Ascending aorta (tissue), 2 donors: ENCODE measurements at regions of chr9 and their contacts with region 1.

Region 1: GRCh38 chr9:110936719-110937452 is 101.4 kb downstream of the LPAR1 start:
- DNase-seq: peak in 1 of 2 donors; percentile 66
- H3K4me3 ChIP-seq: no peak overlapping the region
- H3K27ac ChIP-seq: peak overlapping the region; percentile 84 to 91
- H3K4me1 ChIP-seq: peaks cover 9 to 43% of the 10 kb centered on the region in 2 donors
- H3K27me3 ChIP-seq: no peaks in the 10 kb centered on the region
- CTCF ChIP-seq: no peak

Region 2: GRCh38 chr9:110650991-110651411 is 285.9 kb before region 1 on chr9:
- intact Hi-C with region 1: loop called (anchors 5 kb)
- DNase-seq: peak in 1 of 2 donors; percentile 77
- H3K4me3 ChIP-seq: no peak overlapping the region
- H3K27ac ChIP-seq: peak overlapping the region; percentile 64 to 65
- H3K4me1 ChIP-seq: peaks cover 0 to 13% of the 10 kb centered on the region in 2 donors
- H3K27me3 ChIP-seq: no peaks in the 10 kb centered on the region
- CTCF ChIP-seq: no peak

Region 3: DNA sequence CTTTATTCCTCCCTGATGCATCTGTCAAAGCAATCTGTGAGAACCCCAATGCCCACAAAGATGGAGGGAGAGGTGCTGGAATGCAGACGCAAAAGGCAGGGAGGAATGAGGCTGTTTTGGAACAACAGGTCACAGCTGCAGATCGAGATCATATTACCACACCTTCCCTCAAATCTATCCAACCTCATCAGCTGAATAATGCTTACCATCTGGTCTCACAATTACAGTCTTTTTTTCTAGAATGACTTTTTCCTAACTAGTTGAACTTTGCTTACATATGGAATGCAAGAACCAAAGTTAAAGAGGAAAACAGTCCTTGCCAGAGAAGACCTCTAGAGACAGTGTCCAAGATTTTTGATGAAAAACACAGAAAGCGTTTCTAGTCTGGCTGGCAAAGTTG is 56.7 kb before region 1 on chr9:
- intact Hi-C with region 1: loop called (anchors 5 kb)
- DNase-seq: no peak
- H3K4me3 ChIP-seq: no peak overlapping the region
- H3K27ac ChIP-seq: no peak overlapping the region
- H3K4me1 ChIP-seq: peaks cover 0 to 14% of the 10 kb centered on the region in 2 donors
- H3K27me3 ChIP-seq: no peaks in the 10 kb centered on the region
- CTCF ChIP-seq: no peak

Region 4: GRCh38 chr9:110900917-110901316 is 36.0 kb before region 1 on chr9:
- intact Hi-C with region 1: loop called (anchors 5 kb)
- DNase-seq: no peak
- H3K4me3 ChIP-seq: no peak overlapping the region
- H3K27ac ChIP-seq: peak overlapping the region; percentile 81 to 87
- H3K4me1 ChIP-seq: peaks cover 12 to 59% of the 10 kb centered on the region in 2 donors
- H3K27me3 ChIP-seq: no peaks in the 10 kb centered on the region
- CTCF ChIP-seq: no peak